ENCODE measurements at regions of chr3 and their contacts with region 1.

Region 1: GRCh38 chr3:37210230-37210629 is 35.8 kb upstream of the LRRFIP2 start:
- DNase-seq: no peak
- H3K4me3 Mint-ChIP-seq: no peak overlapping the region
- H3K27ac Mint-ChIP-seq: no peak overlapping the region
- H3K4me1 Mint-ChIP-seq: peaks cover 5% of the 10 kb centered on the region
- H3K27me3 Mint-ChIP-seq: peaks cover 2% of the 10 kb centered on the region

Region 2: GRCh38 chr3:36729204-36730056 is 480.8 kb before region 1 on chr3:
- intact Hi-C with region 1: loop called (anchors 1 kb)
- DNase-seq: no peak
- H3K4me3 Mint-ChIP-seq: no peak overlapping the region
- H3K27ac Mint-ChIP-seq: no peak overlapping the region
- H3K4me1 Mint-ChIP-seq: no peaks in the 10 kb centered on the region
- H3K27me3 Mint-ChIP-seq: peaks cover 14% of the 10 kb centered on the region

Region 3: DNA sequence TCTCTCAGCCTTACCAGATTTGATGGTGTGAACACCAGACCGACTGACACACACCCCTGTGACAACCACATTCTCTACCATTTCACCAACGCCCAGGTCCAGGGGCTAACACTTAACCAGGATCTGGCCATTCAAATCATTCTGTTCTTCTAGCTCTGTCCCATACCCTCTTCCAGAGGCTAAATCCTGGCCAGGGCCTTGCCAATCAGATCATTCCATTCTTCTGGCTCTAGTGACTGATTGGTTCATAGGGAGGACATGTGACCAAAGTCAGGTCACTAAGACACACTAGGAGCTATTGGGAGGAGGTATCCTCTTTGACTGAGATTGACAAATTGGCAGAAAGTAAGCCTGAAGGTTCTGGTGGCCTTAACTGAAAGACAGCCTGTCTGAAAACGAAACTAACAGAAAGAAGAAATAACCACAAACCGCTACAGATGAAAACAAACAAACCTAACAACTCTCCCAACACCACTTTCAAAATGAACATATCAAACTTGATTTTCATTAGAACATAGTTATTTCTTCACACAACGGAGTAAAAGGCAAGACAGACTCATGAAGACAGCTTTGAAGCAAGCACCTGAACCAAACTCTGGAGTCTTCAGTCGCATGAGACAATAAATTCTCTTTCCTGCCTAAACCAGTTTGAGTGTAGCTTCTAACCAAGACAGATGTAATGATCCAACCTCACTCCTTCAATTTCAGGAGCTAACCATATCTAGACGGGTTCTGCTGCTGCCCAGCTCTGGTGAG is 333.9 kb before region 1 on chr3:
- intact Hi-C with region 1: loop called (anchors 10 kb)
- DNase-seq: peak; percentile 20
- H3K4me3 Mint-ChIP-seq: peak overlapping the region; percentile 55
- H3K27ac Mint-ChIP-seq: peak overlapping the region; percentile 69
- H3K4me1 Mint-ChIP-seq: peaks cover 25% of the 10 kb centered on the region
- H3K27me3 Mint-ChIP-seq: peaks cover 18% of the 10 kb centered on the region

Region 4: DNA sequence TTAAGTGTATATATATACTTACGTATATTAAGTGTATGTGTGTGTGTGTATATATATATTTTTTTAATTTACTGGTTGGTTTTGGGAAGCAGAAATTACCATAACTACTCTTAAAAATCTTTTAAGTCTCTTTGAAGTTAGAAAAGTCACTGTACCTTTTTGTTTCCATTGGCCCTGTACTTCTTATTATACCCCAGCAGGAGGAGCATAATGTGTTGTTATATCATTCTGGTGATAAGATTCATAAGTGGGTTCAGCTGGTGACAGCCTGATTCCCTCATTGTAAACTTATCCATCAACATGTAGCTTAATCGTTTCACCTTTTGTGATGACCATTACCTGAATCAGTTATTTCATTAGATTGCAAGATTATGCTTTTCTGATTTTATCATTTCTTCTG is 186.1 kb before region 1 on chr3:
- intact Hi-C with region 1: loop called (anchors 1 kb)
- DNase-seq: no peak
- H3K4me3 Mint-ChIP-seq: no peak overlapping the region
- H3K27ac Mint-ChIP-seq: no peak overlapping the region
- H3K4me1 Mint-ChIP-seq: peaks cover 16% of the 10 kb centered on the region
- H3K27me3 Mint-ChIP-seq: no peaks in the 10 kb centered on the region

Region 5: GRCh38 chr3:37054370-37054769 is 155.9 kb before region 1 on chr3:
- intact Hi-C with region 1: loop called (anchors 1 kb)
- DNase-seq: no peak
- H3K4me3 Mint-ChIP-seq: no peak overlapping the region
- H3K27ac Mint-ChIP-seq: peak overlapping the region; percentile 81
- H3K4me1 Mint-ChIP-seq: peaks cover 10% of the 10 kb centered on the region
- H3K27me3 Mint-ChIP-seq: no peaks in the 10 kb centered on the region